ENCODE measurements at regions of chr1 and their contacts with region 1.

Region 1: DNA sequence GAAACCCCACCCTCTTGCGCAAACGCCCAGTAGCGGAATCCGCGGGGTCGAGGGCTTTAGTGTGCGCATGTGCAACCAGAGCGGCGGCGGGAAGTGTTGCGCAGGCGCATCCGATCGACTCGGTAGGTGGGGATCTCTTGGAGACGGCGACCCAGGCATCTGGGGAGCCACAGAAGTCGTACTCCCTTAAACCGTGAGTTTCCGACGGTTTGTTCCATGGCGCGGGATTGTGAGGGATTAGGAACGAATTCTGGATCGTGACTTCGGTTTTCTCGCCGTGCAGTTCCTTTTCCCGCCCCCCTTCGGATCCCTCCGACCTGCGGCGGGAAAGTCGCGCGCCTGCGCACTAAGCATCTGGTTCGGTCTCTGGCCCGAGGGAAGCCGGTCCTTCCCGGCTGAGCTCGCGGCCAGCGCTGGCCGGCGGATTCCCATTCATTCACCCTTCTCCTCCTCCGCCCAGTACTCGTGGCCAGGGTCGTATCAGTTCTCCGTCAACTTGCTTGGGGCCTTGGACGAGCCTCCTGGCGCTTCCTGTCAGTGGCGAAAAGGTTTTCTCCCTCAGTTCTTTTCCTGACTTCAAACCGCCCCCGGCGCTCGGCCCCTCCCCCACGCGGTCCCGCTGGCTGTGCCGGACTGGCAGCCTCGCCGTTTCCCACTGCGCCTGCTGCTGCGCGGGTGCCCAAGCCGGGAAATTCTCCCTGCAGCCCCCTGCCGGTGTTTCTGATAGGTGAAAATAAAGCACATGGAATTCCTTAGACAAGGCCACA is at the start of gene CDC7:
- DNase-seq: peak; percentile 96
- H3K4me3 ChIP-seq: peak within 1 kb of the TSS; percentile 56
- H3K27ac ChIP-seq: peak within 1 kb of the TSS; percentile 95
- H3K4me1 ChIP-seq: peaks cover 17% of the 10 kb centered on the region
- H3K27me3 ChIP-seq: no peaks in the 10 kb centered on the region
- CTCF ChIP-seq: peak; percentile 70
- total RNA-seq, gene CDC7: 29.6 and 34.0 TPM in 2 replicates

Region 2: GRCh38 chr1:91282695-91283420 is 218.1 kb before region 1 on chr1:
- CTCF ChIA-PET with region 1: no interaction called
- POLR2A ChIA-PET with region 1: no interaction called
- intact Hi-C with region 1: loop called (anchors 5 kb)
- DNase-seq: peak; percentile 83
- H3K4me3 ChIP-seq: no peak overlapping the region
- H3K27ac ChIP-seq: no peak overlapping the region
- H3K4me1 ChIP-seq: no peaks in the 10 kb centered on the region
- H3K27me3 ChIP-seq: no peaks in the 10 kb centered on the region
- CTCF ChIP-seq: peak; percentile 84

Region 3: GRCh38 chr1:91404151-91405012 is 96.6 kb before region 1 on chr1 and contains the start of gene HFM1:
- CTCF ChIA-PET with region 1: interaction called, 5 read pairs
- POLR2A ChIA-PET with region 1: no interaction called
- intact Hi-C with region 1: loop called (anchors 5 kb)
- DNase-seq: peak; percentile 88
- H3K4me3 ChIP-seq: peak within 1 kb of the TSS; percentile 60
- H3K27ac ChIP-seq: peak within 1 kb of the TSS; percentile 68
- H3K4me1 ChIP-seq: peaks cover 10% of the 10 kb centered on the region
- H3K27me3 ChIP-seq: no peaks in the 10 kb centered on the region
- CTCF ChIP-seq: no peak
- total RNA-seq, gene HFM1: 0.69 and 1.3 TPM in 2 replicates

Measured in A673 (cell line).